B cell (primary cell): ENCODE measurements at regions of chr16 and their contacts with region 1.

Region 1: DNA sequence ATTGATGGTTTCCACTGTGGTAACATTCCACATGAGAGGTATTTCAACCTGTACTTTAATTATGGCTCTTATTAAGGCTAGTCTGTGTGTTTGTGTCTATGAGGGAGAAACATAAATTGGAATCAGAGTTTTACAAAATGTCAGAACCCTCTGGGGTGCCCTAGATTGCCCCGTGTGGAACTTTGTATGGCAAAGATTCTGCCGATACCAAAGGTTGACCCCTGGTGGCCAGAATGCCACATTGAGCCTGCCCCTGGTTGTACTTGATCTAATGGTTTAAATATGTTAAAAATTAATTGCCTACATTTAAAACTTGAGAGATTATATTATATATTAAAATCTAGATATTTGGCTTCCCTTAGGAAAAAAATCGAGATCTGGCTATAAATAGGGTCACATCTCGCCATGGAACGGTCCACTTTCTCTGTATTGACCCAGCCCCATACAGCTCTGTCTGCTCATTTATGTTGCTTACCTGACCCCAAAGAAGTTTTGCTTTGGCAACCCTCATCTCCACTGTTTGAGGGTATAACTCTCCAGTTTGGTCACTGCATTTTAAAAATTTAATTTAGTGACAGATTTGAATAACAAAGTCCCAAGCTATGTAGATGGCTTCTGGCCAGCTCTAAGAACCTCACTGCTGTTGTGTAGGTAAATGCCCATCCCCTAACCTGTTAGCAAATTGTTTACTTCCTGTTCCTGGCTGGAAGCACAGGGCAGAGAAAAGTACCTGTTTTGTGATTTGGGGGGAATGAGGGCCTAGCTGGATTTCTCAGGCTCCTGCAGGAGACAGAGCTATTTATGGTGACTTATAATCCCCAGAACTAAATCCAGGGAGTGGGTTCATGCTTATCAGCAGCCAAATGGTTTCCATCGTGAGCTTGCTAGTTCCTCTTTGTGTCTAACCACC is 95.0 kb downstream of the PLCG2 start:
- DNase-seq: peak; percentile 80
- ATAC-seq: peak; percentile 93
- H3K4me3 ChIP-seq: no peak overlapping the region
- H3K4me3 Mint-ChIP-seq: peak overlapping the region; percentile 4
- H3K27ac ChIP-seq: peak overlapping the region in 1 of 2 donors; percentile 48
- H3K27ac Mint-ChIP-seq: peak overlapping the region; percentile 67
- H3K4me1 ChIP-seq: peaks cover 22 to 24% of the 10 kb centered on the region in 2 donors
- H3K4me1 Mint-ChIP-seq: peaks cover 41% of the 10 kb centered on the region
- H3K27me3 ChIP-seq: no peaks in the 10 kb centered on the region
- H3K27me3 Mint-ChIP-seq: no peaks in the 10 kb centered on the region
- CTCF ChIP-seq: peak; percentile 97

Region 2: GRCh38 chr16:81366316-81366932 is 507.7 kb before region 1 on chr16:
- CTCF ChIA-PET with region 1: interaction called, 47 read pairs
- POLR2A ChIA-PET with region 1: no interaction called
- intact Hi-C with region 1: loop called (anchors 1 kb)
- DNase-seq: peak; percentile 73
- ATAC-seq: peak; percentile 85
- H3K4me3 ChIP-seq: no peak overlapping the region
- H3K4me3 Mint-ChIP-seq: no peak overlapping the region
- H3K27ac ChIP-seq: no peak overlapping the region
- H3K27ac Mint-ChIP-seq: no peak overlapping the region
- H3K4me1 ChIP-seq: no peaks in the 10 kb centered on the region
- H3K4me1 Mint-ChIP-seq: no peaks in the 10 kb centered on the region
- H3K27me3 ChIP-seq: no peaks in the 10 kb centered on the region
- H3K27me3 Mint-ChIP-seq: no peaks in the 10 kb centered on the region
- CTCF ChIP-seq: peak; percentile 92

Region 3: GRCh38 chr16:81730090-81731051 is 143.7 kb before region 1 on chr16:
- CTCF ChIA-PET with region 1: interaction called, 128 read pairs
- POLR2A ChIA-PET with region 1: interaction called, 4 read pairs
- intact Hi-C with region 1: no loop called
- DNase-seq: peak; percentile 77
- ATAC-seq: peak; percentile 85
- H3K4me3 ChIP-seq: peak overlapping the region in 4 of 5 experiments; percentile 44 to 61 (median 55)
- H3K4me3 Mint-ChIP-seq: peak overlapping the region; percentile 90
- H3K27ac ChIP-seq: peak overlapping the region in 1 of 2 donors; percentile 62
- H3K27ac Mint-ChIP-seq: peak overlapping the region; percentile 90
- H3K4me1 ChIP-seq: peaks cover 12 to 15% of the 10 kb centered on the region in 2 donors
- H3K4me1 Mint-ChIP-seq: peaks cover 22% of the 10 kb centered on the region
- H3K27me3 ChIP-seq: no peaks in the 10 kb centered on the region
- H3K27me3 Mint-ChIP-seq: no peaks in the 10 kb centered on the region
- CTCF ChIP-seq: peak; percentile 74

Region 4: GRCh38 chr16:81778861-81779535 is 95.1 kb before region 1 on chr16 and contains the start of gene PLCG2:
- CTCF ChIA-PET with region 1: interaction called, 91 read pairs
- POLR2A ChIA-PET with region 1: interaction called, 8 read pairs
- intact Hi-C with region 1: loop called (anchors 1 kb)
- DNase-seq: peak; percentile 91
- ATAC-seq: peak; percentile 85
- H3K4me3 ChIP-seq: peak within 1 kb of the TSS; percentile 81 to 90 (median 83)
- H3K4me3 Mint-ChIP-seq: peak within 1 kb of the TSS; percentile 99
- H3K27ac ChIP-seq: peak within 1 kb of the TSS; percentile 72 to 91
- H3K27ac Mint-ChIP-seq: peak within 1 kb of the TSS; percentile 95
- H3K4me1 ChIP-seq: peaks cover 59 to 67% of the 10 kb centered on the region in 2 donors
- H3K4me1 Mint-ChIP-seq: peaks cover 72% of the 10 kb centered on the region
- H3K27me3 ChIP-seq: no peaks in the 10 kb centered on the region
- H3K27me3 Mint-ChIP-seq: no peaks in the 10 kb centered on the region
- CTCF ChIP-seq: no peak
- total RNA-seq, gene PLCG2: 812 and 852 TPM in 2 replicates

Region 5: GRCh38 chr16:81817789-81818567 is 56.1 kb before region 1 on chr16:
- CTCF ChIA-PET with region 1: interaction called, 27 read pairs
- POLR2A ChIA-PET with region 1: interaction called, 3 read pairs
- intact Hi-C with region 1: loop called (anchors 5 kb)
- DNase-seq: peak; percentile 88
- ATAC-seq: peak; percentile 51
- H3K4me3 ChIP-seq: peak overlapping the region in 3 of 5 experiments; percentile 12 to 44 (median 29)
- H3K4me3 Mint-ChIP-seq: peak overlapping the region; percentile 89
- H3K27ac ChIP-seq: peak overlapping the region; percentile 94 to 98
- H3K27ac Mint-ChIP-seq: peak overlapping the region; percentile 100
- H3K4me1 ChIP-seq: peaks cover 97 to 100% of the 10 kb centered on the region in 2 donors
- H3K4me1 Mint-ChIP-seq: peaks cover 89% of the 10 kb centered on the region
- H3K27me3 ChIP-seq: no peaks in the 10 kb centered on the region
- H3K27me3 Mint-ChIP-seq: no peaks in the 10 kb centered on the region
- CTCF ChIP-seq: no peak

Region 6: GRCh38 chr16:81841722-81842121 is 32.4 kb before region 1 on chr16:
- CTCF ChIA-PET with region 1: interaction called, 19 read pairs
- POLR2A ChIA-PET with region 1: interaction called, 6 read pairs
- intact Hi-C with region 1: loop called (anchors 2 kb)
- DNase-seq: peak; percentile 80
- ATAC-seq: peak; percentile 50
- H3K4me3 ChIP-seq: peak overlapping the region in 1 of 5 experiments; percentile 1
- H3K4me3 Mint-ChIP-seq: peak overlapping the region; percentile 67
- H3K27ac ChIP-seq: peak overlapping the region; percentile 77 to 88
- H3K27ac Mint-ChIP-seq: peak overlapping the region; percentile 83
- H3K4me1 ChIP-seq: peaks cover 79 to 84% of the 10 kb centered on the region in 2 donors
- H3K4me1 Mint-ChIP-seq: peaks cover 88% of the 10 kb centered on the region
- H3K27me3 ChIP-seq: no peaks in the 10 kb centered on the region
- H3K27me3 Mint-ChIP-seq: no peaks in the 10 kb centered on the region
- CTCF ChIP-seq: no peak

Region 7: GRCh38 chr16:81863630-81864352 is 10.3 kb before region 1 on chr16:
- CTCF ChIA-PET with region 1: interaction called, 32 read pairs
- POLR2A ChIA-PET with region 1: interaction called, 8 read pairs
- intact Hi-C with region 1: no loop called
- DNase-seq: peak; percentile 74
- ATAC-seq: peak; percentile 75
- H3K4me3 ChIP-seq: peak overlapping the region in 3 of 5 experiments; percentile 1 to 23 (median 10)
- H3K4me3 Mint-ChIP-seq: peak overlapping the region; percentile 46
- H3K27ac ChIP-seq: peak overlapping the region; percentile 57 to 72
- H3K27ac Mint-ChIP-seq: peak overlapping the region; percentile 68
- H3K4me1 ChIP-seq: peaks cover 58 to 60% of the 10 kb centered on the region in 2 donors
- H3K4me1 Mint-ChIP-seq: peaks cover 73% of the 10 kb centered on the region
- H3K27me3 ChIP-seq: no peaks in the 10 kb centered on the region
- H3K27me3 Mint-ChIP-seq: no peaks in the 10 kb centered on the region
- CTCF ChIP-seq: no peak